Activated CD4-positive, alpha-beta memory T cell treated with anti-CD3 and anti-CD28 coated beads, Interleukin-2, amount 10 ng/mL, durations not matched to agents 7 days and 5 days (primary cell): ENCODE measurements at regions of chr3 and their contacts with region 1.

Region 1: GRCh38 chr3:51941798-51942602 is at the starts of genes PARP3 and RRP9:
- DNase-seq: peak; percentile 100
- H3K4me3 Mint-ChIP-seq: peak within 1 kb of the TSS; percentile 83
- H3K27ac Mint-ChIP-seq: peak within 1 kb of the TSS; percentile 84
- H3K4me1 Mint-ChIP-seq: peaks cover 33% of the 10 kb centered on the region
- H3K27me3 Mint-ChIP-seq: no peaks in the 10 kb centered on the region
- total RNA-seq, gene PARP3: 13.2 to 13.9 TPM
- total RNA-seq, gene RRP9: 16.8 to 17.5 TPM

Region 2: DNA sequence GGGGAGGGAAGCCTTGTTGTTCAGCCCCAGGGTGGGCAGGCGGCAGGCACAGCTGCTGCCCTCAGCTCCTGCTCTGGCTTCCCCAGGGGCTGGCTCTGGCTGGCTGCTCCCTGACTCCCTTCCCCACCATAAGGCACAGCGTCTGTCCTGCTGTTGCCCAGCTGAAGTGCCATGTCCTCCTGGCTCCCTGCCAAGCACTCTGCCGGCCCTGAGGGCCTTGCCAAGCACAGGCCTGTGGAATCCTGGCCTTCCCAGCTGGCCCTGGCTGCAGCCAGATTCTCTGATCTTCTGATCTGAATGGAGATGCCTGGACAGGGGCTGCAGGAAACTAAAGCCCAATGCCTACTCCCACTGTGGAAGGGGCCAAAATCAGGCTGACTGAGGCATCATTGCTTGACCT is 164.0 kb before region 1 on chr3:
- CTCF ChIA-PET with region 1: no interaction called
- POLR2A ChIA-PET with region 1: no interaction called
- DNase-seq: no peak
- H3K4me3 Mint-ChIP-seq: no peak overlapping the region
- H3K27ac Mint-ChIP-seq: no peak overlapping the region
- H3K4me1 Mint-ChIP-seq: no peaks in the 10 kb centered on the region
- H3K27me3 Mint-ChIP-seq: peaks cover 21% of the 10 kb centered on the region

Region 3: GRCh38 chr3:51845129-51845528 is 96.9 kb before region 1 on chr3:
- CTCF ChIA-PET with region 1: no interaction called
- POLR2A ChIA-PET with region 1: no interaction called
- DNase-seq: no peak
- H3K4me3 Mint-ChIP-seq: no peak overlapping the region
- H3K27ac Mint-ChIP-seq: no peak overlapping the region
- H3K4me1 Mint-ChIP-seq: no peaks in the 10 kb centered on the region
- H3K27me3 Mint-ChIP-seq: peaks cover 56% of the 10 kb centered on the region

Region 4: GRCh38 chr3:51967384-51968169 is 25.6 kb after region 1 on chr3 and contains the start of gene PCBP4:
- CTCF ChIA-PET with region 1: interaction called, 52 read pairs
- POLR2A ChIA-PET with region 1: interaction called, 10 read pairs
- DNase-seq: peak; percentile 48
- H3K4me3 Mint-ChIP-seq: peak within 1 kb of the TSS; percentile 80
- H3K27ac Mint-ChIP-seq: peak within 1 kb of the TSS; percentile 61
- H3K4me1 Mint-ChIP-seq: peaks cover 33% of the 10 kb centered on the region
- H3K27me3 Mint-ChIP-seq: peaks cover 8% of the 10 kb centered on the region
- total RNA-seq, gene PCBP4: 31.0 to 34.2 TPM

Region 5: DNA sequence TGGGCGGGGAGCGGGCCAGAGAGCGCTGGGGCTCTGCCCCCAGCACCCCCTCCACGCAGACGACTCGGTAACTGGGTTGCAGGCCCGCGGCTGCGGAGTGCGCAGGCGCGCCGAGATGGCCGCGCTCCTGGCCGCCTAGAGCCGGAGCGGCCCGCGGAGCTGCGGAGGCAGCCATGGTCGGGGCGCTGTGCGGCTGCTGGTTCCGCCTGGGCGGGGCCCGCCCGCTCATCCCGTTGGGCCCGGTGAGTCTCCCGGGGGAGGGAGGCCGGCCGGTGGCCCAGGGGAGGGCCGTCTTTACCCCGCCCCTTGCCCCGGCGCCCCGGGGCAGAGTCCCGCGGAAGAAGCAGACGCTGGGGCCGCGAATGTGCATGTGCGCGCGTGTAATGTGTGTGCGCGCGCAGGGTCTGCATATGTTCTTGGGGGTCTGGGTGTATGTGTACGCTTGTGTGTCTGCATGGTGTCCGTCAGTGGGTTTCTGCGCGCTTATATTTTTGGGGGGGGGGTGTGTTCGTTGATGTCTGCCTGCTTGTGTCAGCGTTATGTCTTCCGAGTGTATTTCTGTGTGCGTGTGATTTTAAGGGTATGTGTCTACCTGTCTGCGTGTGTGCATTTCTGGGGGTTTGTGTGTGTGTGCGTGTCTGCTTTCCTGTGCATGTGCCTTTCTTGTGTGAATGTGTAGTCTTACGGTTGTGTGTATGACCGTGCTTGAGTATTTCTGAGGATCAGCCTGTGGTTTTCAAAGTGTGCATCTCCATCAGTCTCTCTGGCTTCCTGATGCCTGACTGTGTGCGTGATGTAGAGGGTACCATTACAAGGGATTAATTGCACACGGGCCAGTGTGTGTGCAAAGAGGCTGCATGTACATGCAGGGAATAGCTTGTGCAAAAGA is 33.2 kb after region 1 on chr3 and contains the start of gene ABHD14A:
- CTCF ChIA-PET with region 1: interaction called, 52 read pairs
- POLR2A ChIA-PET with region 1: interaction called, 37 read pairs
- DNase-seq: peak; percentile 74
- H3K4me3 Mint-ChIP-seq: peak within 1 kb of the TSS; percentile 98
- H3K27ac Mint-ChIP-seq: peak within 1 kb of the TSS; percentile 91
- H3K4me1 Mint-ChIP-seq: peaks cover 43% of the 10 kb centered on the region
- H3K27me3 Mint-ChIP-seq: no peaks in the 10 kb centered on the region
- total RNA-seq, gene ABHD14A: 10.8 to 13.3 TPM

Region 6: DNA sequence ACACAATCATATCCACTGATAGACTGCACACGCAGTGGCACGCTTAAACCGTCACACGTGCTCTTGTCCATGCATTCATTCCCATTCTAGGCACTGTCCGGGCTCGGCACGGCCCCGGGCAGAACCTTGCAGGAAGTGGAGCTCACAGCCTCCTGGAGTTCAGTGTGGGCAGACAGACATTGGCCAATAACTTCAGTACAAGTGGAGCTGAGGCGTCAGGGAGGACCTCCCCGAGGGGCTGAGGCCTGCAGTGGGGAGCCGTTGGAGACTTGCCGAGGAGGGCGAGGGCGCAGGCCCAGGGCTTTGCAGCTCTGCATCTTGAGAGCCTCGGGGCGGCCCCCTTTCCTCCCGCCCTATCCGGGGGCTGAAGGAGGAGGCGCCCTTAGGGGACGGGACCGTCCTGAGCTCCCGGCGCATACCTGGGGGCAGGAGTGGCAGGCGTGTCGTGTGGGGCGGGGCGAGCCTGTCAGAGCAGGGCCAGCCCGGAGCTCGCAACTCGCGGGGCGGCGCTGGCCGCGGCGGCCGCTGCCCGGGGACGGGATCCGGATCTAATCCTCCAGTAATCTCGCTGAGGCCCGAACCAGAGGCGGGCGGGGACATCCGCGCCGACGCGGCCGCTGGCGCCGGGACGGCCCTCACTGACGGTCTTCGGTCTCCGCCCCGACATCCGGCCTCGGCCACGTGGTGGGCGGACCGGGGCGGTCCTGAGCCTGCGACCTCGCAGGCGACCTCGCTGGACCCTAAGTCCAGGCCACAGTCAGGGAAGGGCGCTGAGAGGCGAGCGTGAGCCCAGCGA is 41.0 kb after region 1 on chr3 and contains the start of gene ACY1:
- CTCF ChIA-PET with region 1: interaction called, 19 read pairs
- POLR2A ChIA-PET with region 1: interaction called, 15 read pairs
- DNase-seq: peak; percentile 79
- H3K4me3 Mint-ChIP-seq: peak within 1 kb of the TSS; percentile 97
- H3K27ac Mint-ChIP-seq: peak within 1 kb of the TSS; percentile 92
- H3K4me1 Mint-ChIP-seq: peaks cover 31% of the 10 kb centered on the region
- H3K27me3 Mint-ChIP-seq: no peaks in the 10 kb centered on the region
- total RNA-seq, gene ACY1: 18.4 to 22.0 TPM

Region 7: GRCh38 chr3:52036222-52036694 is 94.3 kb after region 1 on chr3:
- CTCF ChIA-PET with region 1: no interaction called
- POLR2A ChIA-PET with region 1: no interaction called
- DNase-seq: no peak
- H3K4me3 Mint-ChIP-seq: no peak overlapping the region
- H3K27ac Mint-ChIP-seq: no peak overlapping the region
- H3K4me1 Mint-ChIP-seq: no peaks in the 10 kb centered on the region
- H3K27me3 Mint-ChIP-seq: no peaks in the 10 kb centered on the region